AG04449 (cell line): ENCODE measurements at regions of chr7 and their contacts with region 1.

Region 1: GRCh38 chr7:1432411-1433082 is 26.7 kb downstream of the MICALL2 start:
- DNase-seq: no peak
- H3K4me3 ChIP-seq: no peak overlapping the region
- CTCF ChIP-seq: peak; percentile 98

Region 2: DNA sequence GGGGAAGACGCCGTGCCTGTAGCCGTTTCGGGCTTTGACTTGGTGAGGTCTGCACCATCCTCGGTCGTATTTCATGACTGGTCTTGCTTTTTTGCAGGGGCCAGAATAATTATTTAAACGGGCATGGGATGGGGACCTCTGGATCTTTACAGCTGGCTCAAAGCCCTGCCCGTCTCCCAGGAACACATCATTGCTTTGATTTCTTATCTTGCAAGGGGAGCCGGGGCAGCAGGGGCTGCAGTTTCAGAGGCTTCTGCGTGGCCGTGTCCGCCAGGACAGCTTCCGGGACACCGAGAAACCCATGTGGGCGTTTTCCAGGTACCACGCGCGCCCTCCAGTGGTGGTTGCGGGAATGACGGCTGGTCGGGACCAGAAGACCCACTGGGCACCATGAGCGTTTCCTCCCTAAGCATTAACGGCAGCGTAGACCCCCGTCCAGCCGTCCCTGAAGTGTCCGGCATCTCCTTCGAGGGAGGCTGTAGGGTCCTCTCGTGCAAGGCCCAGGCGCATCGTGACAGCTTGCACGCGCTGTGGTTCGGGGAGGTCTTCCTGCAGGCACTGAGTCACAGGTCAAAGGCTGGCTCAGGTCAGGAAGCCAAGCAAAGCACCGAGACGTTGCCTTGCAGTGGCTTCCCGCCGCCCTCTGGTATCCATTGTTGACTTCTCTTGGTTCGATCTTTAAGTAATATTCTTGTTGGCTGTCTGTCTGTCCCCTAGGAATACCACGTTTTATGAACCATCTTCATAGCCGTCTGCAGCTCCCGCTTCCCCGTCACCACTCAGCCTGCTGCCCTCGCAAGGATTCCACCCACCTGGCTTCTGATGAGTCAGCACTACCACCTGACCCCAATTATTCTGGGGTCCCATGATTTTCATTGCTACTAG is 256.3 kb before region 1 on chr7:
- CTCF ChIA-PET with region 1: interaction called, 16 read pairs
- POLR2A ChIA-PET with region 1: no interaction called
- DNase-seq: no peak
- H3K4me3 ChIP-seq: peak overlapping the region; percentile 25; the same call in 1 of the 2 replicates
- CTCF ChIP-seq: peak; percentile 96

Region 3: GRCh38 chr7:1193593-1194424 is 238.7 kb before region 1 on chr7:
- CTCF ChIA-PET with region 1: interaction called, 71 read pairs
- POLR2A ChIA-PET with region 1: no interaction called
- DNase-seq: no peak
- H3K4me3 ChIP-seq: no peak overlapping the region
- CTCF ChIP-seq: peak; percentile 73

Region 4: GRCh38 chr7:1219498-1219897 is 213.0 kb before region 1 on chr7:
- CTCF ChIA-PET with region 1: interaction called, 21 read pairs
- POLR2A ChIA-PET with region 1: no interaction called
- DNase-seq: no peak
- H3K4me3 ChIP-seq: no peak overlapping the region
- CTCF ChIP-seq: no peak

Region 5: DNA sequence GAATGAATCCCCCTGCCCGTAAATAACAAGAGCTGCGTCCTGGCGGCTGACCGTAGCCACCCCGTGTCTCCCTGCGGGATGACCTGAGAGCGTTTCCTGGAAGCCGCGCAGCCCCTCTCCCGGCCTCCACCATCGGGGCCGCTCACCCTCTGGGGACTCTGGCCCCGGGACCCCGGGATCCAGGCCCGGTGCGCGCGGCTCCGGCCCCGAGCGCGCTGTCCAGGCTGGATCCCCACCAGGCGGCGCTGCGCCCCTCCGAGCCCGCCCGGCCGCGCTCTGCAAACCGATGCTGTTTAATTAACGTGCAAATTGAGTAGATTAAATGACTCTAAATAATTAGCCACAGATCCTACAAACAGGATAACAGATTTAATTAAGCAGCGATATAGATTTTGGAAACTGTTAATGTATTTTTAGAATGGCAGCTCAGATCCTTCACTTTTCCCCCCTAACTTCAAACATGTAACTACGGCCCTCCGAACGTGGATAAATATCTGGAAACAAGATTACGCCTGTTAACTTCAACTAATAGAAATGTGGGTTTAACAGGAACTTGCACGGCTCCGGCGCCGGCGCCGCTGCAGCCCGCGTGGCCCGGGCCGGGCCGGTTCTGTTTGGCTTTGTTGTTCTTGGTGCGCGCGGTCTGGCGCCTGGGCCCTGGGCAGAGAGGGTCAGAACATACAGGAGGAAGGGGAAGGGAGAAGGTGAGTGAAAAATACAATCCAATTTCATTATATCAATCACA is 206.9 kb before region 1 on chr7:
- CTCF ChIA-PET with region 1: interaction called, 34 read pairs
- POLR2A ChIA-PET with region 1: no interaction called
- DNase-seq: no peak
- H3K4me3 ChIP-seq: no peak overlapping the region
- CTCF ChIP-seq: peak; percentile 70

Region 6: DNA sequence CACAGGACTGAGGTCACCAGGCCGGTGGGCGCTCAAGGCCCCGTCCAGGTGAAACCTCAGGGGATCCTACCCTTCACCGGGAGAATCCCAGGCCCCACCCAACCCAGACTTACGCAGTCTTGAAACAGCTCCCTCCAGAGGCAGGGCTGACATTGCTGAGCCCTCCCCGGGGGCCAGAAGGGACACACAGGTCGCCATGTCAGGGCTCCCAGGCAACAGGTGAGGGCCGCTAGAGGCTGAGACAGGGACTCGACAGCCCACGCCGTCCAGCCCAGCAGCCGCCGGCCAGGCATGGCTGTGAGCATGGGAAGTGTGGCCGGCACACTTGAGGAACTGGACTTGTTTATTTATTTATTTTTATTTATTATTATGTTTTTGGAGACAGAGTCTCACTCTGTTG is 16.4 kb after region 1 on chr7:
- CTCF ChIA-PET with region 1: interaction called, 20 read pairs
- POLR2A ChIA-PET with region 1: no interaction called
- DNase-seq: no peak
- H3K4me3 ChIP-seq: no peak overlapping the region
- CTCF ChIP-seq: no peak

Region 7: DNA sequence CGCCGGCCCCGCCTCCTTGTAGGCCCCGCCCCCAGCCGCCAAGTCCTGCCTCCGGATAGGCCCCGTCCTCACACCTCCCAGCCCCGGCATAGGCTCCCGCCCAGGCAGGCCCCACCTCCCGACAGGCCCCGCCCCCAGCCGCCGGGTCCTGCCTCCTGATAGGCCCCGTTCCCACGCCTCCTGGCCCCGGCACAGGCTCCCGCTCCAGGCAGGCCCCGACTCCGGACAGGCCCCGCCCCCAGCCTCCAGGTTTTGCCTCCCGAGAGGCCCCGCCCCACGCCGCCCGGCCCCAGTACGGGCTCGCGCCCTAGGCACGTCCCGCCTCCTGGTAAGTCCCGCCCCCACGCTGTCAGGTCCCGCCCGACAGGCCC is 27.0 kb after region 1 on chr7:
- CTCF ChIA-PET with region 1: interaction called, 16 read pairs
- POLR2A ChIA-PET with region 1: no interaction called
- DNase-seq: peak; percentile 81
- H3K4me3 ChIP-seq: peak overlapping the region; percentile 87
- CTCF ChIP-seq: no peak

Region 8: DNA sequence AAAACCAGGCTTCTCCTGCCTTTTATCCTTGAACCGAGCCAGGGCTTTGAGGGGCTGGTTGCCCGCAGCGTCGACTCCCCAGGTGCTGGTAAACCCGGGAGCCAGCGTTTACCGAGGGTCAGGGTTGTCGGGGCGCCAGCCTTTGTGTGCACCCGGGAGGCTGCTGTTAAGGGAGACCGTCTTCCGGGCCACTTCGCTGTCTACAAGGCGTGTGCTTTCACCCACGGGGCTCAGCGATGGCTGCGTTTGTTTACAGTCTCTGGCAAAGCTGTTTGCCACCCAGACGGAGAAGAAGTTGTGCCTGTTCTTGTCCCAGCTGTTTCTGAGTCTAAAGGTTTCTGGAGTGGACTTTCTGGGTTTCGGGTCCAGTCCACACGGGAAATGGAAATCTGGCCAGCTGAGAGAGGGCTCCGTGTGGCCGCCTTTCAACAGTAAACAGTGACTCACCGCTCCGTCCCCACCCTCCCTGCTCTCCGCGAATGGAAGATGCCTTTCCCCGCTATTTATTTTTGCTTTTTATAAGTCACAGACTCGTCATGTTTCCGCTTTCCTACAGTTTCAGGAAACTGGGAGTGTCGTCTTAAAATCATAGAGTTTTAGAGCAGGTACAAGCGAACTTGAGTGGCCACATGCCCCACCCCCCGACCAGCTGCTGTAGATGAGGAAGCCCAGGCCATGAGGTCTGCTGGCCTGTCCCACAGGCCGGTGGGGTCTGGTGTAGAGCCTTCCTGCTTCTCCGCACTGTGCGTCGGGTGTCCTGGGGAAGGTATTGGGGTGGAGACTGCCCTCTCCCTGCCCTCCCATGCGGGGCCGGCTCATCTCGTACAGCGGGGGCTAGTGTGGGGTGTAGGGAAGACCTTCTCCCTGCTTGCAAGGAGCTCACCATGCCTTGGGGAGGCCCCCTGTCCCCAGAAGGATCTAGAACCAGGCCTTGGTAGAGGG is 100.2 kb after region 1 on chr7:
- CTCF ChIA-PET with region 1: no interaction called
- POLR2A ChIA-PET with region 1: no interaction called
- DNase-seq: peak; percentile 63
- H3K4me3 ChIP-seq: peak overlapping the region; percentile 67
- CTCF ChIP-seq: no peak

Region 9: DNA sequence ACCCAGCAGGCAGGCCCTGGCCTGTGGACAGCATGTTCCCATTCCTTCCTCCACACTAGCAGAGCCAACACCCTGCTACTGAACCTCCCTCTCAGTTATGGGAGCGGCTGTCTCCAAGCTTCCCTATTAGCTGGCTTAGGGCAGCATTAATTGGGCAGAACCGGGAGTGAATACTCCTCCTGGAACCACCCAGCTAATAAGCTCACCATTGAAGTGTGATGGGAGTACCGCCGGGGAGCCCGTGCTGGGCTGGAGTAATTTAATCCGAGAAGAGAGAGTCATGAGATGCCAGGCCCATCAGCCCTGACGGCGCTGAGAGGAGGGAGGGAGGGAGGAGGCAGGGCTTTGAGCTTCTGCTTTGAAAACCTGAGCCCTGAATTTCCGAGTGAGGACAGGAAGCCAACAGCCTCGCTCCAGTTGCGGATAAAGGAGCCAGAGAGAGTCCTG is 205.7 kb after region 1 on chr7:
- CTCF ChIA-PET with region 1: no interaction called
- POLR2A ChIA-PET with region 1: no interaction called
- DNase-seq: no peak
- H3K4me3 ChIP-seq: no peak overlapping the region
- CTCF ChIP-seq: no peak

Region 10: GRCh38 chr7:1742555-1743303 is 310.2 kb after region 1 on chr7:
- CTCF ChIA-PET with region 1: no interaction called
- POLR2A ChIA-PET with region 1: no interaction called
- DNase-seq: no peak
- H3K4me3 ChIP-seq: no peak overlapping the region
- CTCF ChIP-seq: no peak

Region 11: DNA sequence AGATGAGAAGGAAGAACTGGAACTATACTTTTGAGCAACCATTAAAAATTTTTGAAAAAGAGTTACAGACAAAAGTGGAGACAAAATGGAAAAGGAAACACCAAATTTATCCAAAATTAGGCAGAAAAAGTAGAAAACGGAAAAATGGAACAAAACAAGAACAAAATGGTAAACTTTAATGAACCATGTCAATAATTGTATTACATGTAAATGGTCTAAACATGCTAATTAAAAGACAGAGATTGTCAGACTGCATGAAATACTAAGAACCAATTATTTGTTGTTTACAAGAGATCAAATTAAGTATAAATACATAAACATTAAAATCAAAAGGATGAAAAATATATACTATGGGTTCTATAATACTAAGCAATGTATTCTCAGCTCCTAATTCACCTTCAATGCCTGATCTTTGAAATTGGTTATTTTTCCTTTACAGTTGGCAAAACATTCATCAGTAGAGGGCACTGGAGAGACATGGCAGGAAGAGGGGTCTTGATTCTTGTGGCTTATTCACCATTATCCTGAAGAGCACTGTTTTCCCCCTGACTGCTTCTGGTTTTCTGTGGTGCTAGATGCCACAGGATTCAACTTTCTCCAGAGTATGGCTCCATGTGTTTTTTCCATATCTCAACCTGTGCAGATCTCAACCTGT is 362.5 kb after region 1 on chr7:
- CTCF ChIA-PET with region 1: no interaction called
- POLR2A ChIA-PET with region 1: no interaction called
- DNase-seq: no peak
- H3K4me3 ChIP-seq: no peak overlapping the region
- CTCF ChIP-seq: peak; percentile 3